CD8-positive, alpha-beta T cell (primary cell): ENCODE measurements at regions of chr2 and their contacts with region 1.

Region 1: DNA sequence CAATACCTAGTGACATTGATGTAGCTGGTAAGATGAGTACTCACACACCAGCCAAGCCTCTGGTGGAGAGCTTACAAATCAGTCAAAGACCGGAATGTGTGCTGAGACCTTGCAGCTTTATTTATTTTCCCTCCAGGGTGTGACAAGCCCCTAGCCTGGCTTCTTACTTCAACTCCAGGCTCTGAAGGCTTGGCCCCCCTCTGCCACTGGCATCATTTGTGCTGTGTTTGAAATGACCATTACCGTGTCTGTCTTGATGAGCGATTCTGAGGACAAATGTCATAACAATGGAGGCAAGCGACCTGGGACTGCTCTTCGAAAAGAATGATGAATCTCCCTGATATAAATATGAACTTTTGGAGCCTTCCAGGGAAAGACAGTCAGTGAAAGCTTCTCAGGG is 749.9 kb upstream of the HS6ST1 start:
- DNase-seq: no peak
- ATAC-seq: no peak
- H3K4me3 ChIP-seq: no peak overlapping the region
- H3K4me3 Mint-ChIP-seq: no peak overlapping the region
- H3K27ac ChIP-seq: no peak overlapping the region
- H3K27ac Mint-ChIP-seq: no peak overlapping the region
- H3K4me1 ChIP-seq: no peaks in the 10 kb centered on the region
- H3K4me1 Mint-ChIP-seq: no peaks in the 10 kb centered on the region
- H3K27me3 ChIP-seq: no peaks in the 10 kb centered on the region
- H3K27me3 Mint-ChIP-seq: no peaks in the 10 kb centered on the region
- CTCF ChIP-seq: no peak

Region 2: DNA sequence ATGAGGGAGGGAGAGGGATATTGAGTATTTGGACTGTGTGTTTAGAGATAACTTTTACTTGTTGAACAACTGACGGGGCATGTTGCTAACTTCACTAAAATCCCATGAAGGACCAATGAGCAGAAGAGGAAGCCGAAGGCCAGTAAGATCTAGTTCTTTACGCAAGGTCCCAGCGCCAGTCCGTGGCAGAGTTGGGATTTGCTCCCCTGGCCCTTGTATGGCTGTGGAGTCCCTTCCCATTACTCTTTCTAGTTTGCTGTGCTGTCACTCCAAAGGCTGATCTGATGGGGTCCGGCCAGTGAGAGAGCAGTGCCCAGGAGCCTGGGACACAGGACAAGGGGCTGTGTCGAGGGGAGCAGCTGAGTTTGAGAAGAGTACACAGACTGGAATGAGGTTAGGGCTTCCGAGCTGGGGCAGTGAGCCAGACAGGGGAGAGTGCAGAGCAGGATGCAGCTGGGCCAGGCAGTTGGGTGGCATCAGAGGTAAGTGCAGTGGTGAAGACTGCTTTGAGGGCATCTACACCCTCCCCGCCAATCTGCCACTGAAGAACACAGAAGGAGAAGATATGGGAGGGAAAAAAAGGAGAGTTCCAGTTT is 57.0 kb before region 1 on chr2:
- CTCF ChIA-PET with region 1: no interaction called
- POLR2A ChIA-PET with region 1: no interaction called
- intact Hi-C with region 1: no loop called
- DNase-seq: no peak
- ATAC-seq: no peak
- H3K4me3 ChIP-seq: no peak overlapping the region
- H3K4me3 Mint-ChIP-seq: no peak overlapping the region
- H3K27ac ChIP-seq: no peak overlapping the region
- H3K27ac Mint-ChIP-seq: no peak overlapping the region
- H3K4me1 ChIP-seq: no peaks in the 10 kb centered on the region
- H3K4me1 Mint-ChIP-seq: no peaks in the 10 kb centered on the region
- H3K27me3 ChIP-seq: no peaks in the 10 kb centered on the region
- H3K27me3 Mint-ChIP-seq: no peaks in the 10 kb centered on the region
- CTCF ChIP-seq: no peak

Region 3: DNA sequence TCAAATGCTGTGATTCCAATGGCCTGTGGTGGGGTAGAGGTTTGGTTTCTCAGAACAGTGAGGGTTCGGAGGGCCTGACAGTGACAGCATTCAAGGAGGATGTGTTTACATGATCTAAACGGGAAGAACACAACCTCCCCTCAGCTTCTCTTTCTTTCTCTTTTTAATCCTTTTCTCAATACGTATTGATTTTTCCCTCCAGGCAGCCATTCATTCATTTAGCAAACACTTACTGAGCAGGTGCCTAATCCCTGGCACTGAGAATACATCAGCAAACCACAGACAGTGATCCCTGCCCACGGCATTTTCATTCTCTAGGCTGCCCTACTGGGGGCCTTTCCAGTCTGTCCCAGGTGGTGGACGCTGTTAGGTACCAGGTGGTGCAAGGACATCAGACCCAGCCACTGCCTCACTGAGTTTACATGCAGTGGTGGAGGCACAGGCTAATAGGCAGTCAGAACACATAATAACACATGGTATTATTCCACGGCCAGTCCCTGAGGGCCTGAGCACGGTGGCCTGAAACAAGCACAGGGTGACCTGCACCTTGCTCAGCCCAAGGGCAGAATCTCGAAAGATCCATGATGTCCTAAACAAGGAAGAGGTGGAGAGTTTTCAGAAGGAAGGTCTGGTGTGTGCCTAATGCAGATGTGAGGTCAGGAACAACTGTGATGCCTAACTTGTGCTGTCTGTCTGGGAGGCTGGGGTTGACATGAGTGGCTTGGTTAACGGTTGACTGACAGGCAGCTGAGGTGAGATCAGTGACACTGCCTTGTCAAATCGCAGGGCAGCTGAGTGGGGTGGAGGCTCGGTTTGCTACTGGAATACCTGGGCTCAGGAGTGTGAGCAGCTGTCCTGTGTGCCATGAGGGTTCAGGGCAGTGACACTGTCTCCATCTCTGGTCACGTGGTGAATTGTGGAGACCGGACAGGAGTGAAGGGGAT is 35.7 kb after region 1 on chr2:
- CTCF ChIA-PET with region 1: no interaction called
- POLR2A ChIA-PET with region 1: no interaction called
- intact Hi-C with region 1: loop called in 1 of 2 experiments (anchors 1 kb)
- DNase-seq: no peak
- ATAC-seq: no peak
- H3K4me3 ChIP-seq: no peak overlapping the region
- H3K4me3 Mint-ChIP-seq: no peak overlapping the region
- H3K27ac ChIP-seq: no peak overlapping the region
- H3K27ac Mint-ChIP-seq: no peak overlapping the region
- H3K4me1 ChIP-seq: no peaks in the 10 kb centered on the region
- H3K4me1 Mint-ChIP-seq: no peaks in the 10 kb centered on the region
- H3K27me3 ChIP-seq: no peaks in the 10 kb centered on the region
- H3K27me3 Mint-ChIP-seq: peaks cover 2% of the 10 kb centered on the region
- CTCF ChIP-seq: no peak

Region 4: GRCh38 chr2:129175051-129175450 is 106.5 kb after region 1 on chr2:
- CTCF ChIA-PET with region 1: no interaction called
- POLR2A ChIA-PET with region 1: no interaction called
- intact Hi-C with region 1: no loop called
- DNase-seq: no peak
- ATAC-seq: no peak
- H3K4me3 ChIP-seq: no peak overlapping the region
- H3K4me3 Mint-ChIP-seq: no peak overlapping the region
- H3K27ac ChIP-seq: no peak overlapping the region
- H3K27ac Mint-ChIP-seq: no peak overlapping the region
- H3K4me1 ChIP-seq: no peaks in the 10 kb centered on the region
- H3K4me1 Mint-ChIP-seq: no peaks in the 10 kb centered on the region
- H3K27me3 ChIP-seq: no peaks in the 10 kb centered on the region
- H3K27me3 Mint-ChIP-seq: no peaks in the 10 kb centered on the region
- CTCF ChIP-seq: no peak